Heart left ventricle (tissue), 16 donors: ENCODE measurements at regions of chr5 and their contacts with region 1.

Region 1: GRCh38 chr5:142492781-142493281 is 168.0 kb upstream of the SPRY4 start:
- DNase-seq: no peak
- ATAC-seq: peak; percentile 35 to 62 (median 49)
- H3K4me3 ChIP-seq: no peak overlapping the region
- H3K27ac ChIP-seq: peak overlapping the region; percentile 27 to 72 (median 58)
- H3K4me1 ChIP-seq: peaks cover 0 to 50% (median 20%) of the 10 kb centered on the region in 12 donors
- H3K27me3 ChIP-seq: no peaks in the 10 kb centered on the region
- CTCF ChIP-seq: no peak
- POLR2A ChIP-seq: no peak

Region 2: DNA sequence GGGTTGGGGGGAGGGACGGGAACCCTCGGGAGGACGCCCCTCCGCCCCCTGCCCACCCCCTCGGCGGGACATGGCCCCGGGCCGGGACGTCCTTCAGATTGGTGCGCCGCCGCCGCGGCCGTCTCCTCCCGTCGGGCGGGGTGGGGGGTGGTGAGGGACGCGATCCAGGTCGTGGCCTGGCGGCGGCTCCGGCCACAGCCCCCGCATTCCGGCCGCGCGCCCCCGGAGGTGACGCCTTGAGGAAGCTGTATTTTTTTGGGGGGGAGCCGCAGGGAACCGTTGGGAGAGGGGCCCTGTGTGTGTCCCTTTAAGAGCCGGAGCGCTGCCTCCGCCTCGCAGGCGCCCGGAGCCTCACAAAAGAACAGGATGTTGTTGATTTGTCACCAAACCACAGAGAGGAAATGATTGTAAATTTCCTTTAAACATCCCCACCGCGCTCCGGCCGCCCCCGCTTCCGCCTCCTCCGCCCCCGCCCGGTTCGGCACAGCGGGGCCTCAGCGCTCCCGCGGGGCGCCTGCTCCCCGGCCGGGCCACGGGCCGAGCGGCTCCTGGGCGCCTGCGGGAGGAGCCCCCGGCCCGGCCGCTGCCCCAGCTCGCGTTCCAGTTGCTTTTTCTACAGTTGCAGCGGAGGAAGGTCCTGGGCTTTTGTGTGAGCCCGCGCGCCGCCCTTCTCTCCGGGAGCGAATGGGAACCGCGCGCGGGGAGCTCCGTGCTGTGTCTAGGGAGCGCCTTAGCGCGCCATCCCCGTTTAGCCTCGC is 135.9 kb before region 1 on chr5:
- intact Hi-C with region 1: loop called in 1 of 10 experiments (anchors 5 kb)
- DNase-seq: peak; percentile 89 to 93 (median 91)
- ATAC-seq: peak; percentile 74 to 93 (median 92)
- H3K4me3 ChIP-seq: peak overlapping the region; percentile 52 to 73 (median 64)
- H3K27ac ChIP-seq: peak overlapping the region; percentile 85 to 97 (median 94)
- H3K4me1 ChIP-seq: peaks cover 0 to 22% (median 12%) of the 10 kb centered on the region in 12 donors
- H3K27me3 ChIP-seq: peaks cover 0 to 33% (median 0%) of the 10 kb centered on the region in 9 donors
- CTCF ChIP-seq: peak in 1 of 12 donors; percentile 16
- POLR2A ChIP-seq: peak; percentile 7 to 62

Region 3: DNA sequence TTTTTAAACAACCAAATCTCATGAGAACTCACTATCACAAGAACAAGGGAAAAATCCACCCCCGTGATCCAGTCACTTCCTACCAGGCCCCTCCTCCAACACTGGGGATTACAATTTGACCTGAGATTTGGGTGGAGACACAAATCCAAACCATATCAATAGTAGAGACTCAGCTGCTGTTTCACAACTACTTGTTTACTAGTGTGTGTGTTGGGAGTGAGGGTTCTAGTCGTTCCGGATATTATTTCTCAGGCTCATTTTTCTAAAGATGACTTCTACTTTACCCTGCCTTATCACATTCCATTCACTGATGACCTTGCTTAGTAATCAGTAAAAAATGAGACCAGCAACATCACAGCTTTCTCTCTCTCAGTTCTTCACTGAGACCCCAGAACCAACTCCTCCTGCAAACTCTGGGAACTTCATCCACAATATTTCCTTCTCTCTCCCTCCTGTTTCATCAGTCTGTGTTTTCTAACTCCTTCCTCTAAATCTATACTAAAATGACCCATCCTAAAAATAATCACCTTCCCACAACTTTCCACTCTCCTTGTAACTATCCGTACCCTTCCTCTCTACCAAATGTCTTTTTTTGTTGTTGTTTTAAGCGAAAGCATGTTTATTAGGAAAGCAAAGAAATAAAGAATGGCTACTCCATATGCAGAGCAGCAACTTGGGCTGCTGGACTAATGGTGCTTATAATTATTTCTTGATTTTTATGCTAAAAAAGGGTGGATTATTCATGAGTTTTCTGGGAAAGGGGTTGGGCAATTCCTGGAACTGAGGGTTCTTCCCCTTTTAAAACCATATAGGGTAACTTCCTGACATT is 46.5 kb before region 1 on chr5:
- intact Hi-C with region 1: loop called in 1 of 10 experiments (anchors 5 kb)
- DNase-seq: no peak
- ATAC-seq: peak; percentile 22 to 62 (median 46)
- H3K4me3 ChIP-seq: no peak overlapping the region
- H3K27ac ChIP-seq: peak overlapping the region in 10 of 12 donors; percentile 0 to 73 (median 55)
- H3K4me1 ChIP-seq: peaks cover 0 to 28% (median 12%) of the 10 kb centered on the region in 12 donors
- H3K27me3 ChIP-seq: no peaks in the 10 kb centered on the region
- CTCF ChIP-seq: no peak
- POLR2A ChIP-seq: no peak